ENCODE measurements at regions of chr6 and their contacts with region 1.

Region 1: GRCh38 chr6:157756708-157757429 is 66.2 kb upstream of the SNX9 start:
- DNase-seq: peak; percentile 63 to 82 (median 69)
- H3K4me3 ChIP-seq: no peak overlapping the region
- H3K4me3 Mint-ChIP-seq: peak overlapping the region in 3 of 7 donors; percentile 20 to 41 (median 28)
- H3K27ac ChIP-seq: no peak overlapping the region
- H3K27ac Mint-ChIP-seq: peak overlapping the region in 5 of 8 donors; percentile 7 to 89 (median 64)
- H3K4me1 ChIP-seq: peaks cover 41% of the 10 kb centered on the region
- H3K4me1 Mint-ChIP-seq: peaks cover 26 to 64% (median 42%) of the 10 kb centered on the region in 3 donors
- H3K27me3 ChIP-seq: no peaks in the 10 kb centered on the region
- H3K27me3 Mint-ChIP-seq: peaks cover 23 to 25% of the 10 kb centered on the region in 2 donors

Region 2: DNA sequence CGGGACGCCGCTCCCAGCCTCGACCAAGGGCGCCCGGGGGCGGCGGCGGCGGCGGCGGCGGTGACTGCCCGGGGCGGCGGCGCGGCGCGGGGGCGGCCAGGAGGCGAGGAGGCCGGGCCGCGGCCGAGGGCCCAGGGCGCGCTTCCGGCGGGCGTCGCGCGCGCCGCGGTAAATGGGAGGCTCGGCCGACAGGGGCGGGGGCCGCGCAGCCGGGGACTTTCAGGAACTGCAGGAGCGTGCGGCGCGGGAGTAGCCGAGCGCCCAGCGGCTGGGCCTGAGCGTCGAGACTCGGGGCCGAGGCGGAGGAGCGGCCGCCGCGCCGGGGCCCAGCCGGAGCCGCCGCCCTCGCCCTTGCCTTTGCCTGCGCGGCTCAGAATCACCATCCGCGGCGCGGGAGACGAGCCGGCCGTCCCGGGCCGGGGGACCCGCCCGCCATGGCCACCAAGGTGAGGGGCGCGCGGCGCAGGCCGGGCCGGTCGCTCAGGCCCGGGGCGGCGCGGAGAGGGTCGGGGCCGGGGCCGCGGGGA is 66.2 kb after region 1 on chr6 and contains the start of gene SNX9:
- CTCF ChIA-PET with region 1: interaction called, 13 read pairs
- POLR2A ChIA-PET with region 1: no interaction called
- DNase-seq: peak; percentile 40 to 73 (median 51)
- H3K4me3 ChIP-seq: peak within 1 kb of the TSS; percentile 64
- H3K4me3 Mint-ChIP-seq: peak within 1 kb of the TSS; percentile 91 to 97 (median 96)
- H3K27ac ChIP-seq: peak within 1 kb of the TSS; percentile 83
- H3K27ac Mint-ChIP-seq: peak within 1 kb of the TSS; percentile 94 to 98 (median 98)
- H3K4me1 ChIP-seq: peaks cover 14% of the 10 kb centered on the region
- H3K4me1 Mint-ChIP-seq: peaks cover 21 to 32% (median 24%) of the 10 kb centered on the region in 3 donors
- H3K27me3 ChIP-seq: no peaks in the 10 kb centered on the region
- H3K27me3 Mint-ChIP-seq: peaks cover 8% of the 10 kb centered on the region in 2 donors
- total RNA-seq, gene SNX9: 60.3 to 60.5 TPM